ENCODE measurements at regions of chr16 and their contacts with region 1.

Region 1: GRCh38 chr16:47018223-47018891 is 44.9 kb upstream of the DNAJA2 start:
- DNase-seq: peak; percentile 80 to 84 (median 81)
- H3K4me3 ChIP-seq: peak overlapping the region in 1 of 3 experiments; percentile 25
- H3K4me3 Mint-ChIP-seq: peak overlapping the region in 1 of 2 donors; percentile 59
- H3K27ac ChIP-seq: peak overlapping the region; percentile 26 to 73
- H3K27ac Mint-ChIP-seq: peak overlapping the region; percentile 32 to 93 (median 91)
- H3K4me1 ChIP-seq: peaks cover 32 to 36% of the 10 kb centered on the region in 2 donors
- H3K4me1 Mint-ChIP-seq: peaks cover 42% of the 10 kb centered on the region
- H3K27me3 ChIP-seq: no peaks in the 10 kb centered on the region
- H3K27me3 Mint-ChIP-seq: peaks cover 0 to 3% (median 0%) of the 10 kb centered on the region in 3 donors
- CTCF ChIP-seq: peak; percentile 57

Region 2: GRCh38 chr16:46961373-46962353 is 56.7 kb before region 1 on chr16:
- intact Hi-C with region 1: loop called in 1 of 2 experiments (anchors 5 kb)
- DNase-seq: peak; percentile 71 to 78 (median 72)
- H3K4me3 ChIP-seq: peak overlapping the region in 1 of 3 experiments; percentile 7
- H3K4me3 Mint-ChIP-seq: peak overlapping the region; percentile 53 to 78
- H3K27ac ChIP-seq: peak overlapping the region; percentile 34 to 90
- H3K27ac Mint-ChIP-seq: peak overlapping the region; percentile 90 to 99 (median 94)
- H3K4me1 ChIP-seq: peaks cover 15 to 18% of the 10 kb centered on the region in 2 donors
- H3K4me1 Mint-ChIP-seq: peaks cover 13% of the 10 kb centered on the region
- H3K27me3 ChIP-seq: no peaks in the 10 kb centered on the region
- H3K27me3 Mint-ChIP-seq: no peaks in the 10 kb centered on the region
- CTCF ChIP-seq: no peak

Region 3: GRCh38 chr16:46973207-46973995 is 45.0 kb before region 1 on chr16 and contains the start of gene DNAJA2:
- intact Hi-C with region 1: loop called in 1 of 2 experiments (anchors 5 kb)
- DNase-seq: peak; percentile 91 to 95 (median 93)
- H3K4me3 ChIP-seq: peak within 1 kb of the TSS; percentile 76 to 94 (median 77)
- H3K4me3 Mint-ChIP-seq: peak within 1 kb of the TSS; percentile 92 to 93
- H3K27ac ChIP-seq: peak within 1 kb of the TSS; percentile 92 to 94
- H3K27ac Mint-ChIP-seq: peak within 1 kb of the TSS; percentile 95 to 99 (median 98)
- H3K4me1 ChIP-seq: peaks cover 18 to 25% of the 10 kb centered on the region in 2 donors
- H3K4me1 Mint-ChIP-seq: peaks cover 25% of the 10 kb centered on the region
- H3K27me3 ChIP-seq: no peaks in the 10 kb centered on the region
- H3K27me3 Mint-ChIP-seq: peaks cover 0 to 2% (median 0%) of the 10 kb centered on the region in 3 donors
- CTCF ChIP-seq: no peak
- polyA plus RNA-seq, gene DNAJA2: 14.4 to 63.4 (median 62.9) TPM

Region 4: GRCh38 chr16:46996391-46996790 is 22.0 kb before region 1 on chr16:
- intact Hi-C with region 1: no loop called
- DNase-seq: no peak
- H3K4me3 ChIP-seq: no peak overlapping the region
- H3K4me3 Mint-ChIP-seq: no peak overlapping the region
- H3K27ac ChIP-seq: no peak overlapping the region
- H3K27ac Mint-ChIP-seq: no peak overlapping the region
- H3K4me1 ChIP-seq: no peaks in the 10 kb centered on the region
- H3K4me1 Mint-ChIP-seq: peaks cover 3% of the 10 kb centered on the region
- H3K27me3 ChIP-seq: no peaks in the 10 kb centered on the region
- H3K27me3 Mint-ChIP-seq: peaks cover 0 to 5% (median 2%) of the 10 kb centered on the region in 3 donors
- CTCF ChIP-seq: no peak

Measured in CD14-positive monocyte (primary cell).